GM18951 (cell line): ENCODE measurements at regions of chr12 and their contacts with region 1.

Region 1: GRCh38 chr12:97513918-97514317 is 51.3 kb downstream of the RMST start:
- POLR2A ChIP-seq: no peak

Region 2: GRCh38 chr12:97568458-97569180 is 54.7 kb after region 1 on chr12:
- in situ Hi-C with region 1: no loop called
- POLR2A ChIP-seq: no peak

Region 3: DNA sequence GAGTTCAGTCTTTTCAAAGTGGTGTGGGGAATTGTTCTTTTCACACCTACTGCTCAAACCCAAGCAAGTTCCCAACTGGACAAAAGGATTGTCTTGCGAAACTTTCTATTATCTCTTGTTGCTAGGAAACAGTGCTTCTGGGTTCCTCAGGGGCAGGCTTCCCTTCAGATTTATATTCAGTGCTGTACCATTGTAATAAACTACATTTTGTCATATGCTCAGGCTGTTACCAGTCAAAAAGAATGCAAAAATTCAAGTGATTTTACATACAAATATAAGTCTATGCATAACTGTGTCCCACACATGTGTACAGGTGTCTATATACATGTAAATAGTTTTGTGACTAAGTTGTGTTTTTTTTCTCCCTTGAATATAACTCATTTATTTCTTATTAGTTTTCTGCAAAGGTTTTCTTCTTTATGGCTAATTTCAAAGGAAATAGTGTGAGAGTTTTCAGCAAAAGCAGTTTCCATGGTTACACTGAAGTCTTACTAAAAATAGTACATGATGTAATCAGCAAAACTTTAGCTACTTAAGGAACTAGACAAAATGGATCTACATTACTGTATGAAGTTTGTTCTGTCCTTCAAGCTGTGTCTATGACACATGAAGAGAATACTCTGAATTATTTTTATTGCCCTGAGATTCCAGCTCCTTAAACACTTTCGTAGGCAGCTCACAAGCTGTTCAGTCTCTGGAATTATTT is 571.3 kb after region 1 on chr12:
- in situ Hi-C with region 1: no loop called
- POLR2A ChIP-seq: no peak

Region 4: GRCh38 chr12:98274430-98275130 is 760.7 kb after region 1 on chr12:
- in situ Hi-C with region 1: loop called (anchors 25 kb)
- POLR2A ChIP-seq: no peak